ENCODE measurements at regions of chr2 and their contacts with region 1.

Region 1: DNA sequence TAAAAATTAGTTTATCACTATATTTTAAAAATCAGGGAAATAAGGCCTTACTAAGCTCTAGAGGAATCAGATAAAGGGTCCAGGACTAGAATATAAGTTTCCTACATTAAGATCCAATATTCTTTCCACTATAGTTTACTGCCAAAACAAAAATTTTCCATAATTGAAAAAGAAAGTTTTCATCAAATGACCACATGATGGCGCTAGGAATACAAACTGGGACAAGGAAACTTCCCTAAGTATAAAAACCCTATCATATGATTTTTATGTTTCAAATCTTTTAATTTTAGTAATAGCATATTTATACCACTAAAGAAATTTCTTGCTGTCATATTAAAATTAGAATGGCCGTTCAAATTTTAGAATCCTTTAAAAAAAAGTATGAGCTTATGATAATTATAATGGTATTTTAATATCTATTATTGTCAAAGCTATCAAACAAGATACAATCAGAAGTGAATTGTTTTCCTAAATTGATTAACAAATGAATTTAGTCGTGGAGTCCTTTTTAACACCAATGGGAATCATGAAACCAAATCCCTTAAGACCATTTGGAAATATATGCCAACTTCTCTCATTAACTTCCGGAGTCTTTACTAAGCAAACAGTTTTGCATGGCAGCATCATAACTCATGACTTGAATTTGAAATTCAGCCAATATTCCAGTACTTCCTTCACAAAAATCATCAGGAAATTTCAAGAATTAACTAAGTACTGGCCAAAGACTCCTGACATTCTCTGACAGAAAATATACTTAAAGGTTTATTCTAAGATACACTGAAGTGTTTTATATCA is 70.3 kb downstream of the SCN1A start:
- DNase-seq: no peak
- H3K4me3 Mint-ChIP-seq: no peak overlapping the region
- H3K27ac Mint-ChIP-seq: no peak overlapping the region
- H3K4me1 Mint-ChIP-seq: no peaks in the 10 kb centered on the region
- H3K27me3 Mint-ChIP-seq: no peaks in the 10 kb centered on the region

Region 2: DNA sequence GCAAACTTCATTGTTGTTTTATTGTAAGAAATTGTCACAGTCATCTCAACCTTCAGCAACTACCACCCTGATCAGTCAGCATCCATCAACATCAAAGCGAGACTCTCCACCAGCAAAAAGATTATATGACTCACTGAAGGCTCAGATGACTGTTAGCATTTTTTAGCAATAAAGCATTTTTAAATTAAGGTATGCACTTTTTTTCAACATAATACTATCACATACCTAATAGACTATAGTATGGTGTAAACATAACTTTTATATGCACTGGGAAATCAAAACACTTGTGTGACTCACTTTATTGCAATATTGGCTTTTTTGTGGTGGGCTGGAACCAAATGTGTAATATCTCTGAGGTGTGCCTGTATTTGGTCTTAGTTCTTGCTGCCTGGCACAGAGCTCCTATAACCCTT is 54.6 kb after region 1 on chr2:
- CTCF ChIA-PET with region 1: no interaction called
- intact Hi-C with region 1: no loop called
- DNase-seq: peak; percentile 18
- H3K4me3 Mint-ChIP-seq: no peak overlapping the region
- H3K27ac Mint-ChIP-seq: no peak overlapping the region
- H3K4me1 Mint-ChIP-seq: no peaks in the 10 kb centered on the region
- H3K27me3 Mint-ChIP-seq: no peaks in the 10 kb centered on the region

Region 3: GRCh38 chr2:166127217-166128155 is 69.9 kb after region 1 on chr2 and contains the start of gene SCN1A:
- CTCF ChIA-PET with region 1: interaction called, 14 read pairs
- intact Hi-C with region 1: loop called (anchors 1 kb)
- DNase-seq: no peak
- H3K4me3 Mint-ChIP-seq: no peak within 1 kb of the TSS
- H3K27ac Mint-ChIP-seq: no peak within 1 kb of the TSS
- H3K4me1 Mint-ChIP-seq: peaks cover 2% of the 10 kb centered on the region
- H3K27me3 Mint-ChIP-seq: peaks cover 12% of the 10 kb centered on the region
- total RNA-seq, gene SCN1A: not detected

Region 4: DNA sequence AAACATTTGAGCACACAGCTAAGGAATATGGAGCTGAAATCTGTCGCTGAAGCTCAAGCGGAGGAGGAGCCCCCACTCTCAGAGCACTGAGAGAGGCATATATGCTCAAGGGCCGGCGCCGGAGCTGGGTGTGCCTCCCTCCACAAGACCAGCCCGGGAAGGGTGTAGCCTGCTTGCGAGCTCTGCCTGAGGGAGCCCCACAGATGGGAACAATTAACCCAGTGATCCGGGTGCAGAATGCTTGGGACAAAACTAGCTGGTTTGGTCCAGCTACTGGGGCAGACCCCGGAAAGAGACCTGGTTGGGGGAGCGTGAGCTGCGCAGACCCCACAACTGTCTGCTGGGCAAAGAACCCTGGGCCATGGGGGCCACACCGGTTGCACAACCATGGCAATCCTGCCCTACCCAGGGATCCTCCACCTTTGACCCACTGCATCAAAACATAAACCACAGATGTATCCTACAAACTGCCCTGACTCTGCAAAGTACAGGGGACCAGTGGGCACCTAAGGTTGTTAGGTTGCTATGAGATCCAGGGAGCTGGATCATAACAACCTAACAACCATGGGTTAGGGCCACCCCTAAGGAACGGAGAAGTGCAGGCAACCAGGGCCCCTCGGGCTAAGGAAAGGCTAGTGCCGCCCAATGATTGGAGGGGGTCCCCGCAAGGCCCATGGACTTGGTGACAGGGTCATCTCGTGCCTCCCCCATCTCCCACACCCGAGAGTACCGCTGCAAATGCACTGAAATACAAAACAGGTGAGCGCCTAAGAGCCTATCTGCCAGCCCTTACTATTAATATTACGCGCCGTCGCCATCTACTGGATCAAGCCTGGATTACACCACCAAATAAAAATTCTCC is 123.6 kb after region 1 on chr2:
- CTCF ChIA-PET with region 1: interaction called, 4 read pairs
- intact Hi-C with region 1: loop called (anchors 1 kb)
- DNase-seq: peak; percentile 56
- H3K4me3 Mint-ChIP-seq: no peak overlapping the region
- H3K27ac Mint-ChIP-seq: no peak overlapping the region
- H3K4me1 Mint-ChIP-seq: no peaks in the 10 kb centered on the region
- H3K27me3 Mint-ChIP-seq: peaks cover 7% of the 10 kb centered on the region

Region 5: GRCh38 chr2:166282154-166282553 is 224.6 kb after region 1 on chr2:
- CTCF ChIA-PET with region 1: no interaction called
- intact Hi-C with region 1: no loop called
- DNase-seq: no peak
- H3K4me3 Mint-ChIP-seq: no peak overlapping the region
- H3K27ac Mint-ChIP-seq: no peak overlapping the region
- H3K4me1 Mint-ChIP-seq: no peaks in the 10 kb centered on the region
- H3K27me3 Mint-ChIP-seq: no peaks in the 10 kb centered on the region

Region 6: DNA sequence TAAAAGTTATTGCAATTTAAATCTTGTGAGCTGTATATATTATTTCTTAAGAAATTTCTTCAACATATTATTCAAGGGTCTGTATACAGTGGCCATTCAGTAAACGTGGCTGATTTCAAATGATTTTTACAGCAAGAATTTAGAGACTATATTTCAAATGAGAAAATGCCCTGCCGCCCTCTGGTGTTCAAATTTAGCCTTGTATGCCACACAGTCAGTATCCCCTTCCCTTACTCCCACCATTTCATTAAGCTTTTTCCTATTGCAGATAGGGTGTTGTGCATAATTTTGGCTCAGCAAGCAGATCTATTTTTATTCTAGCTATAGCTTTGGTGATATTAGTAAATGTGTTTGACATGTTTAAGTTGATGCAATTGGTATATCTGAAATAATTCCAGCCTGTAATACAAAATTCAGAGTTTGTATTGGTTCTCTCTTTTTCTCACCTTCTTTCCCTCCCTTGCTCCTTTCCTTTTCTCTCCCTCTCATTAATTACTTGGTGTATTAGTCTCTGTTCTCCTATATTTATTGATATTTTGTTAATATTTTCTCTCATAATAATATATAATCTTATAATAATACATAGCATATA is 459.2 kb after region 1 on chr2:
- CTCF ChIA-PET with region 1: no interaction called
- intact Hi-C with region 1: loop called (anchors 10 kb)
- DNase-seq: peak; percentile 26
- H3K4me3 Mint-ChIP-seq: no peak overlapping the region
- H3K27ac Mint-ChIP-seq: no peak overlapping the region
- H3K4me1 Mint-ChIP-seq: no peaks in the 10 kb centered on the region
- H3K27me3 Mint-ChIP-seq: peaks cover 1% of the 10 kb centered on the region